Kidney (tissue), 22 donors: ENCODE measurements at regions of chr3 and their contacts with region 1.

Region 1: GRCh38 chr3:67118632-67119031 is 120.5 kb downstream of the KBTBD8 start:
- DNase-seq: no peak
- H3K4me3 ChIP-seq: no peak overlapping the region
- H3K27ac ChIP-seq: no peak overlapping the region
- H3K4me1 ChIP-seq: no peaks in the 10 kb centered on the region
- H3K27me3 ChIP-seq: no peaks in the 10 kb centered on the region
- CTCF ChIP-seq: no peak

Region 2: DNA sequence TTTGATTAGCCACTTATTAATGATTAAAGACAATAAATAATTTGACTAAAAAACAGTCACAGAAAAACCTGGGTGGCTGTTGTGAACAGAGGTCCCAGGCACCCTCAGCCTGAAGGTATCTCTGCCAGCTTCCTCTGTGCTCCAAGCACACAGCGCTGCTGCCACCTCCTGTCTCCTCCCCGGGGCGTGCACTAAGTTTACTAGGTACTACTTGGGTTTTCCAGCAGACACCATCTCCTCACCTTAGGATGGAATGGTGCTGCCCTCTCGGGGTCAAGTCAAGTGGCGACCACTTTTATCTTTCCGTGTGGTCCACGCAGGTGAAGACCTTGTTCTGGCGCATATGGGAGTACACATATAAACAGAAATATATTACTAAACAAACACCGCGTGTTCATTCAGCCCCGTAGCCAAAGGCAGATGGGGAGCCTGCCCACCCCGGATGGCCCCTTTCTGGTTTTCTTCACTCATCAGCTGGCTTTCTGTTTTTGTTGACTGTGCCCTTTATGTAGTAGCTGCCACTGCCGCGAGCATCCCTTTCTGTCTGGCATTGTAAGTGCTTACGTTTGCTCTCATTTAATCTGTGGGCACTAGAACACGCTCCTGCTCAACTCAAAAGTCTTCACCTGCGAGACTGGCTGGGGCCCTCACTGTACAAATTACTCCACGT is 745.8 kb before region 1 on chr3:
- intact Hi-C with region 1: no loop called
- DNase-seq: peak in 4 of 5 donors; percentile 63 to 75 (median 68)
- H3K4me3 ChIP-seq: no peak overlapping the region
- H3K27ac ChIP-seq: no peak overlapping the region
- H3K4me1 ChIP-seq: no peaks in the 10 kb centered on the region
- H3K27me3 ChIP-seq: no peaks in the 10 kb centered on the region
- CTCF ChIP-seq: no peak

Region 3: GRCh38 chr3:68880632-68881031 is 1762.0 kb after region 1 on chr3:
- intact Hi-C with region 1: loop called (anchors 5 kb)
- DNase-seq: no peak
- H3K4me3 ChIP-seq: no peak overlapping the region
- H3K27ac ChIP-seq: no peak overlapping the region
- H3K4me1 ChIP-seq: no peaks in the 10 kb centered on the region
- H3K27me3 ChIP-seq: no peaks in the 10 kb centered on the region
- CTCF ChIP-seq: no peak